ENCODE measurements at regions of chr4 and their contacts with region 1.

Region 1: DNA sequence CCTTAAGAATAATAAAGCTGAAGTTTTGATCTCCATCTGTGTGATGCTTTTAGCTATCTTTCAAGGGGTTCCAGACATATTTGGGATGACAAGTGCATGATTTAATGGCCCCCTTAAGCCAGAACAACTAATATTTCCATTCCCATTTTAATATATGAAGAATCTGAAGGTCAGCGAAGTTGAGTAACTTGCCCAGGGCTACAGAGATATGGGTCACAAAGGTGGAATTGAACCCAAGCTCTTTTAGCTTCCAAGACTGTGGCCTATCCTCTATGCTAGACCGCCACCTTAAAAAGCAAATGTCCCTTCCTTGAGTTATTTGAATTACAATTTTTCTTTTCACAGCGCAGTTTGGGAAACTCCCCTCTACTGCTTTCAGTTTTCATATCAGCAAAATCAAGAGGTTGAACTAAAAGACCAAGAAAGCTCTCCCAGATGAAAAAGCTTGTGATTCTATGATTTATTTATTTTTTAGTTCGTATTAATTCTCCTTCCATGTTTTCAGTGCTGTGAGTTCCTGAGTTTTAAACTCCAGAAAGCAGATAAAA is 174.6 kb upstream of the C1QTNF7 start:
- DNase-seq: no peak
- H3K4me3 ChIP-seq: no peak overlapping the region
- H3K27ac ChIP-seq: no peak overlapping the region
- H3K4me1 ChIP-seq: peaks cover 0 to 5% (median under 1%) of the 10 kb centered on the region in 4 experiments; a peak in 3 of 7 replicates
- H3K27me3 ChIP-seq: peaks cover 0 to 3% (median 0%) of the 10 kb centered on the region in 4 experiments; a peak in 1 of 7 replicates
- CTCF ChIP-seq: no peak
- EP300 ChIP-seq: no peak
- POLR2A ChIP-seq: no peak
- RAD21 ChIP-seq: no peak

Region 2: DNA sequence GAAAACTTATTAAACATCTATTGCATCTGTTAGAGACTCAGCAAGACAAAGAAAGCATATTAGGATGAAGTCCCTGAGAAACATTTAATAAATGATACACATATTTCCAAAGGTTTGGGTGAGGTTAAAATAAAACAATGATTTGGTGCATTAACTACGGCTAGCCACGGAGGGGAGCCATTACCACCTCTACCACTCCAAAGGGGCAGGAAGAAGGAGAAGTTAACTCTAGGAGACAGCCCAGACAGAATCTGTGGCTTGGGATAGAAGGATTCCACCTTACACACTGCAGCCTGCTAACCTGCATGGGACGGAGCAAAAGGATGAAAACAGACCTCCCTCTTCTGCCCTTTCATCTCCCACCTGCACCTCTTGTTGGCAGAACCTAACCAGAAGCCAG is 14.6 kb before region 1 on chr4:
- CTCF ChIA-PET with region 1: interaction called, 18 read pairs
- POLR2A ChIA-PET with region 1: no interaction called
- DNase-seq: peak in 1 of 2 experiments; percentile 65
- H3K4me3 ChIP-seq: no peak overlapping the region
- H3K27ac ChIP-seq: no peak overlapping the region
- H3K4me1 ChIP-seq: no peaks in the 10 kb centered on the region
- H3K27me3 ChIP-seq: no peaks in the 10 kb centered on the region
- CTCF ChIP-seq: peak; percentile 35 to 83 (median 72)
- EP300 ChIP-seq: no peak
- POLR2A ChIP-seq: no peak
- RAD21 ChIP-seq: peak; percentile 96 to 97

Region 3: DNA sequence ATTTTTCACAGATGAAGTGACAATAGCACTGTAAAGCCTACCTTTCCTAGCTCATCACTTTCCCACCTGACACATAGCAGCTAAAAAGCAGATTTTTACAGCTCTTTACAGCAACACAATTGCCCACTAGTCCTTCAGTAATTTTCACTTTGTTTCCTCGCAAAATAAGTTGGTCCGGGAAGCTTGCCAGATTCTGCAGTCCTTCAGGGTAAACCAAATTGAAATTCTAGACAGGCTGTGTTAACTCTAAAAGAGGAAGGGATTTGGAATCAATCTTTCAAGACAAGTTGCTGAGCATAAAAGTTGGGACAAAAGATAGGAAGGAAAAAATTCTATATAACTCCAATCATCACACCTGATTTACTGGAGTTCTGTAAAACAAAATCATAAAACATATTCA is 183.2 kb after region 1 on chr4:
- CTCF ChIA-PET with region 1: no interaction called
- POLR2A ChIA-PET with region 1: no interaction called
- DNase-seq: no peak
- H3K4me3 ChIP-seq: no peak overlapping the region
- H3K27ac ChIP-seq: no peak overlapping the region
- H3K4me1 ChIP-seq: no peaks in the 10 kb centered on the region
- H3K27me3 ChIP-seq: no peaks in the 10 kb centered on the region
- CTCF ChIP-seq: no peak
- EP300 ChIP-seq: no peak
- POLR2A ChIP-seq: no peak
- RAD21 ChIP-seq: no peak